ENCODE measurements at regions of chr7 and their contacts with region 1.

Region 1: GRCh38 chr7:80974396-80975334 is 55.8 kb upstream of the SEMA3C start:
- DNase-seq: no peak
- ATAC-seq: no peak
- H3K4me3 ChIP-seq: no peak overlapping the region
- H3K27ac ChIP-seq: no peak overlapping the region
- H3K4me1 ChIP-seq: no peaks in the 10 kb centered on the region
- H3K27me3 ChIP-seq: no peaks in the 10 kb centered on the region
- CTCF ChIP-seq: no peak
- POLR2A ChIP-seq: no peak
- RAD21 ChIP-seq: no peak

Region 2: GRCh38 chr7:80922196-80922595 is 52.5 kb before region 1 on chr7:
- CTCF ChIA-PET with region 1: no interaction called
- POLR2A ChIA-PET with region 1: no interaction called
- RAD21 ChIA-PET with region 1: no interaction called
- intact Hi-C with region 1: no loop called
- DNase-seq: no peak
- ATAC-seq: no peak
- H3K4me3 ChIP-seq: no peak overlapping the region
- H3K27ac ChIP-seq: no peak overlapping the region
- H3K4me1 ChIP-seq: peaks cover 23 to 37% of the 10 kb centered on the region in 2 experiments; a peak in 3 of 4 replicates
- H3K27me3 ChIP-seq: no peaks in the 10 kb centered on the region
- CTCF ChIP-seq: no peak
- POLR2A ChIP-seq: no peak
- RAD21 ChIP-seq: no peak

Region 3: GRCh38 chr7:80957226-80957777 is 17.4 kb before region 1 on chr7:
- CTCF ChIA-PET with region 1: no interaction called
- POLR2A ChIA-PET with region 1: no interaction called
- RAD21 ChIA-PET with region 1: no interaction called
- intact Hi-C with region 1: loop called (anchors 2 kb)
- DNase-seq: no peak
- ATAC-seq: no peak
- H3K4me3 ChIP-seq: no peak overlapping the region
- H3K27ac ChIP-seq: no peak overlapping the region
- H3K4me1 ChIP-seq: no peaks in the 10 kb centered on the region
- H3K27me3 ChIP-seq: no peaks in the 10 kb centered on the region
- CTCF ChIP-seq: no peak
- POLR2A ChIP-seq: no peak
- RAD21 ChIP-seq: no peak